ENCODE measurements at regions of chr22 and their contacts with region 1.

Region 1: DNA sequence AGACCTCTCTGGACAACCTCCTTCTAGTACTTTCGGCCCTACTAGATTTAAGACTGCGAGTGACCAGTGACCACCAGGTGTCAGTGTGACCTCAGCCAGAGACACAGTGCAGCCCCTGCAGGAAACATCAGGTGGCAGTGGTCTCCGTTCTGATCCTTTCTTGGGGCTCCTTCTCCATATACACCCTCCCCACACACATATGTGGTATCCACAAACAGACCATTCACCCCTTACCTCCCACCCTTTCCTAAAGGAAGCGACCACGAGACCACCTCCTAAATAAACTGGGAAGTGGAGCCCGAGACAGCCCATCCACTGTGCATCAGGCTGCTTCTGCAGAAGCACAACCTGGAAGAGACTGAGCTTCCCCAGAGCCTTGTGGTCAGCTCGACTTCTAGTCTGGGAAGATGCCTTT is 38.5 kb upstream of the CYP2D6 start:
- DNase-seq: peak; percentile 51
- ATAC-seq: peak; percentile 97
- H3K4me3 ChIP-seq: no peak overlapping the region
- H3K27ac ChIP-seq: no peak overlapping the region
- H3K4me1 ChIP-seq: peaks cover 10% of the 10 kb centered on the region
- H3K27me3 ChIP-seq: no peaks in the 10 kb centered on the region
- CTCF ChIP-seq: peak; percentile 93 to 100 (median 96); a peak in 5 of 6 replicates
- EP300 ChIP-seq: no peak
- POLR2A ChIP-seq: no peak
- RAD21 ChIP-seq: peak; percentile 100

Region 2: DNA sequence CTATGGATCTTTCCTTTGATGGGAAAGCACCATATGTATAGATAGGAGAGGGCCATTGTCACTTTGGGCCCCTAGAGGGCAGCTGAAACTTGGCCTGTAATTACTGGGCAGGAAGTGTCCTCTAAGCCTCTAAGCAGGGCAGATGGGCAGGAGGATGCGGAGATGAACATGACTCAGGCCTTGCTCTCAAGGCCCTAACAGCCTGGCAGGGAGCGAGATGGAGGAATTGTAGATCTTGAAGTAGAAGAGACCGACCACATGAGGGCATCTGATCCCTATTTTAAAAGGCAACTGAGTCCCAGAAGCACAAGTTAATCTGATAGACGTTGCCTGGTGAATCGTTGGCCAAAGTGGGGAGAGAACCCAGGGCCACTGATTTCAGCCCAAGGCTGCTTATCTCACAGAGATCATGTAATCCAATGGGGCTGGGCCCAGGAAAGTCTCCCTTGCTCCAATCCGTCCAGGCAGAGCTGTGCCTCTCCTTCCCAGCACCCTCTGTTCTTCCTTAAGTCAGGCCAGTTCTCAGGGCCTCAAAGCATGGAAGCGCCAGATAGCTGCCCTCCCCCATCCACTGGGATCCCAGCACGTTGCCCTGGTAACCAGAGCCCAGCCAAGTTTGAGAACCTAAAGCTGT is 202.3 kb before region 1 on chr22:
- CTCF ChIA-PET with region 1: no interaction called
- POLR2A ChIA-PET with region 1: no interaction called
- RAD21 ChIA-PET with region 1: interaction called, 3 read pairs
- SMC1A ChIA-PET with region 1: interaction called, 3 read pairs
- in situ Hi-C with region 1: no loop called
- intact Hi-C with region 1: loop called (anchors 5 kb)
- DNase-seq: peak; percentile 54
- ATAC-seq: peak; percentile 89
- H3K4me3 ChIP-seq: no peak overlapping the region
- H3K27ac ChIP-seq: no peak overlapping the region
- H3K4me1 ChIP-seq: no peaks in the 10 kb centered on the region
- H3K27me3 ChIP-seq: no peaks in the 10 kb centered on the region
- CTCF ChIP-seq: peak; percentile 39 to 69 (median 67); a peak in 5 of 6 replicates
- EP300 ChIP-seq: no peak
- POLR2A ChIP-seq: no peak
- RAD21 ChIP-seq: peak; percentile 76

Region 3: DNA sequence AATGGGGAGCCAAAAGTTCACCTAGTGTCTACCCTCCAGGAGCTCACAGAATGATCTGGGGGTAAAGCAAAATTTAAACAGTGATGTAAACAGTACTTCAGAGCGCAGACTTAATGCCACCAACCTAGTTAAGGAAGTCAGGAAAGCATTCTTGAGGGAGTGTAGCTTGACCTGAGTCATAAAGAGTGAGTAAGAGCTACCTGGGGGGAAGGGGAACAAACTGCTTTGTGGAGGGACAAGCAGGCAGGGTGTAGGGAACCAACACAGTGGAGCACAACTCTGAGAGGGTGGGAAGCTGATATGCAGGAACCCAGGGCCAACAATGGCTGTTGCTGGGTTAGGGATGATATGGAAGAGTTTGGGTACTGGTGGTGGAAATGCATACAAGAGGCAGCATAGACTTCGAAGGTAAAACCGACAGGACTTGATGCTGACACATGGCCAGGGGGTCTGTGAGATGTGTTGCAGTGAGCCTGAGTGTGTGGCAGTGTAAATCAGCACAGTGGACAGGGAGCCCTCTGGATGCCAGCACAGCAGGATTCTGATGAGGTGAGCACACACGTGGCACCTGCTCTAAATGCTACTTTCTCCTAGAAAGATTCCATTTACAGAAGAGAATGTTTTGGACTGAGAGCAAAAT is 19.9 kb after region 1 on chr22:
- CTCF ChIA-PET with region 1: interaction called, 7 read pairs
- POLR2A ChIA-PET with region 1: interaction called, 27 read pairs
- RAD21 ChIA-PET with region 1: interaction called, 17 read pairs
- SMC1A ChIA-PET with region 1: interaction called, 153 read pairs
- in situ Hi-C with region 1: no loop called
- intact Hi-C with region 1: no loop called
- DNase-seq: no peak
- ATAC-seq: no peak
- H3K4me3 ChIP-seq: no peak overlapping the region
- H3K27ac ChIP-seq: no peak overlapping the region
- H3K4me1 ChIP-seq: no peaks in the 10 kb centered on the region
- H3K27me3 ChIP-seq: no peaks in the 10 kb centered on the region
- CTCF ChIP-seq: no peak
- EP300 ChIP-seq: no peak
- POLR2A ChIP-seq: no peak
- RAD21 ChIP-seq: no peak

Region 4: GRCh38 chr22:42262964-42263363 is 93.9 kb after region 1 on chr22:
- CTCF ChIA-PET with region 1: interaction called, 12 read pairs
- POLR2A ChIA-PET with region 1: interaction called, 3 read pairs
- RAD21 ChIA-PET with region 1: interaction called, 5 read pairs
- SMC1A ChIA-PET with region 1: interaction called, 10 read pairs
- in situ Hi-C with region 1: no loop called
- intact Hi-C with region 1: loop called (anchors 2 kb)
- DNase-seq: peak; percentile 24
- ATAC-seq: peak; percentile 68
- H3K4me3 ChIP-seq: no peak overlapping the region
- H3K27ac ChIP-seq: no peak overlapping the region
- H3K4me1 ChIP-seq: peaks cover 13% of the 10 kb centered on the region
- H3K27me3 ChIP-seq: no peaks in the 10 kb centered on the region
- CTCF ChIP-seq: no peak
- EP300 ChIP-seq: no peak
- POLR2A ChIP-seq: no peak
- RAD21 ChIP-seq: no peak

Region 5: DNA sequence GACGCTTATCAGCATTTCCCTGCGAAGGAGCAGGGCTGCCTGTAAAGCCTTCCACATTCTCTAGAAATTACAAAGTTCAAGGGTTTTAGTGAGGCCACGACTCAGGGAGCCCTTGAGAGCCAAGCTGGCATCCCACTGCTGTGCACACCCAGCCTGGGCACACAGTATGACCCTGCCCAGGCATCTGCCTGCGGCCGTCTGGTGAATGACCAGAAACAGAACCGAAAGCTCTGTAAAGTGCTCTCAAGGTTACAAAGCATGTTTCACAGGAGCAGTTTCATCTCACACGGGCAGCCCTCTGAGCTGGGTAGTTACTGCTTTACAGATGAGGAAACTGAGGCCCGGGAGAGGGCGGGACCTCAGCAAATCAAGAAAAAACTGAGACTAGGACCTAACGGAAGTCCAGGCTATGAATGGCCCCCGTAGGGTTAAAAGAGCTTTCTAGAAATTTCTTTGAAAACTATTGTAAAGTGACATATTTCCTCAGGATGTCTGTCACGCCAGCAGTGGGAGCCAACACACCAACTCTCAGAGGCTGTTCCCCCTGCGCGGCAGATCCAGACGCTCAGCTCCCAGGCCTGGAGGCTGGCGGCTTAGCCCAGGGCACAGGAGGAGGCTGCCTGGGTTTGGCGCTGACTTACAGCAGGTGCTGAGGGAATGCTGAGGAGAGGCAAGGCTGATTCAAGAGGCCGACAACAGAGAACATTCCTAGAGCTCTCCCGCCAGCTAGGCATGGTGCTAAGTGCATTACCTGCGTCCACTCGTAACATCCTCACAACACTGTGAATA is 109.1 kb after region 1 on chr22:
- CTCF ChIA-PET with region 1: interaction called, 8 read pairs
- POLR2A ChIA-PET with region 1: interaction called, 3 read pairs
- RAD21 ChIA-PET with region 1: interaction called, 11 read pairs
- SMC1A ChIA-PET with region 1: interaction called, 19 read pairs
- in situ Hi-C with region 1: no loop called
- intact Hi-C with region 1: no loop called
- DNase-seq: no peak
- ATAC-seq: peak; percentile 94
- H3K4me3 ChIP-seq: no peak overlapping the region
- H3K27ac ChIP-seq: no peak overlapping the region
- H3K4me1 ChIP-seq: peaks cover 15% of the 10 kb centered on the region
- H3K27me3 ChIP-seq: no peaks in the 10 kb centered on the region
- CTCF ChIP-seq: peak; percentile 26 to 53 (median 39); a peak in 4 of 6 replicates
- EP300 ChIP-seq: no peak
- POLR2A ChIP-seq: no peak
- RAD21 ChIP-seq: peak; percentile 60

Region 6: GRCh38 chr22:42369245-42370041 is 200.4 kb after region 1 on chr22:
- CTCF ChIA-PET with region 1: interaction called, 10 read pairs
- POLR2A ChIA-PET with region 1: no interaction called
- RAD21 ChIA-PET with region 1: interaction called, 3 read pairs
- SMC1A ChIA-PET with region 1: no interaction called
- in situ Hi-C with region 1: no loop called
- intact Hi-C with region 1: no loop called
- DNase-seq: peak; percentile 71
- ATAC-seq: peak; percentile 99
- H3K4me3 ChIP-seq: peak overlapping the region; percentile 81
- H3K27ac ChIP-seq: no peak overlapping the region
- H3K4me1 ChIP-seq: peaks cover 12% of the 10 kb centered on the region
- H3K27me3 ChIP-seq: peaks cover 15 to 20% of the 10 kb centered on the region in 2 experiments; a peak in 3 of 4 replicates
- CTCF ChIP-seq: no peak
- EP300 ChIP-seq: no peak
- POLR2A ChIP-seq: peak; percentile 61
- RAD21 ChIP-seq: no peak

Region 7: GRCh38 chr22:42473484-42474193 is 304.6 kb after region 1 on chr22:
- CTCF ChIA-PET with region 1: interaction called, 15 read pairs
- POLR2A ChIA-PET with region 1: interaction called, 4 read pairs
- RAD21 ChIA-PET with region 1: interaction called, 4 read pairs
- SMC1A ChIA-PET with region 1: interaction called, 10 read pairs
- in situ Hi-C with region 1: no loop called
- intact Hi-C with region 1: loop called (anchors 1 kb)
- DNase-seq: no peak
- ATAC-seq: peak; percentile 89
- H3K4me3 ChIP-seq: no peak overlapping the region
- H3K27ac ChIP-seq: no peak overlapping the region
- H3K4me1 ChIP-seq: no peaks in the 10 kb centered on the region
- H3K27me3 ChIP-seq: 0 out of 4 replicates have a peak, but pooled peaks cover 1 to 3% of the 10 kb centered on the region in 2 experiments
- CTCF ChIP-seq: peak; percentile 67 to 73 (median 70)
- EP300 ChIP-seq: no peak
- POLR2A ChIP-seq: no peak
- RAD21 ChIP-seq: peak; percentile 68